ENCODE measurements at regions of chr9 and their contacts with region 1.

Region 1: GRCh38 chr9:87812375-87813118 is 70.1 kb upstream of the SPATA31E1 start:
- DNase-seq: no peak
- H3K4me3 ChIP-seq: no peak overlapping the region
- H3K27ac ChIP-seq: no peak overlapping the region
- H3K4me1 ChIP-seq: no peaks in the 10 kb centered on the region; a peak in 1 of 7 replicates
- H3K27me3 ChIP-seq: no peaks in the 10 kb centered on the region
- CTCF ChIP-seq: peak; percentile 78 to 99 (median 97)
- EP300 ChIP-seq: no peak
- POLR2A ChIP-seq: no peak
- RAD21 ChIP-seq: peak; percentile 94

Region 2: GRCh38 chr9:87684627-87685219 is 127.8 kb before region 1 on chr9:
- CTCF ChIA-PET with region 1: interaction called, 88 read pairs
- POLR2A ChIA-PET with region 1: no interaction called
- DNase-seq: peak in 1 of 2 experiments; percentile 84
- H3K4me3 ChIP-seq: no peak overlapping the region
- H3K27ac ChIP-seq: no peak overlapping the region
- H3K4me1 ChIP-seq: no peaks in the 10 kb centered on the region; a peak in 2 of 7 replicates
- H3K27me3 ChIP-seq: no peaks in the 10 kb centered on the region
- CTCF ChIP-seq: peak; percentile 70 to 80 (median 76)
- EP300 ChIP-seq: no peak
- POLR2A ChIP-seq: no peak
- RAD21 ChIP-seq: peak; percentile 43 to 58; a peak in 3 of 4 replicates

Region 3: GRCh38 chr9:87707805-87708506 is 104.6 kb before region 1 on chr9:
- CTCF ChIA-PET with region 1: interaction called, 15 read pairs
- POLR2A ChIA-PET with region 1: no interaction called
- DNase-seq: no peak
- H3K4me3 ChIP-seq: no peak overlapping the region
- H3K27ac ChIP-seq: no peak overlapping the region
- H3K4me1 ChIP-seq: no peaks in the 10 kb centered on the region; a peak in 1 of 7 replicates
- H3K27me3 ChIP-seq: no peaks in the 10 kb centered on the region
- CTCF ChIP-seq: no peak
- EP300 ChIP-seq: no peak
- POLR2A ChIP-seq: no peak
- RAD21 ChIP-seq: no peak

Region 4: GRCh38 chr9:87725900-87726709 is 86.4 kb before region 1 on chr9 and contains the start of gene CTSL:
- CTCF ChIA-PET with region 1: interaction called, 67 read pairs
- POLR2A ChIA-PET with region 1: interaction called, 3 read pairs
- DNase-seq: peak; percentile 85 to 93
- H3K4me3 ChIP-seq: peak within 1 kb of the TSS; percentile 53 to 76 (median 62)
- H3K27ac ChIP-seq: peak within 1 kb of the TSS; percentile 72; the same call in 1 of the 2 replicates
- H3K4me1 ChIP-seq: no peaks in the 10 kb centered on the region; a peak in 3 of 7 replicates
- H3K27me3 ChIP-seq: no peaks in the 10 kb centered on the region; a peak in 1 of 7 replicates
- CTCF ChIP-seq: peak; percentile 47 to 65 (median 64)
- EP300 ChIP-seq: no peak
- POLR2A ChIP-seq: peak; percentile 59 to 88
- RAD21 ChIP-seq: peak; percentile 53 to 69; a peak in 3 of 4 replicates
- total RNA-seq, gene CTSL: 34.4 and 38.2 TPM in 2 replicates

Region 5: DNA sequence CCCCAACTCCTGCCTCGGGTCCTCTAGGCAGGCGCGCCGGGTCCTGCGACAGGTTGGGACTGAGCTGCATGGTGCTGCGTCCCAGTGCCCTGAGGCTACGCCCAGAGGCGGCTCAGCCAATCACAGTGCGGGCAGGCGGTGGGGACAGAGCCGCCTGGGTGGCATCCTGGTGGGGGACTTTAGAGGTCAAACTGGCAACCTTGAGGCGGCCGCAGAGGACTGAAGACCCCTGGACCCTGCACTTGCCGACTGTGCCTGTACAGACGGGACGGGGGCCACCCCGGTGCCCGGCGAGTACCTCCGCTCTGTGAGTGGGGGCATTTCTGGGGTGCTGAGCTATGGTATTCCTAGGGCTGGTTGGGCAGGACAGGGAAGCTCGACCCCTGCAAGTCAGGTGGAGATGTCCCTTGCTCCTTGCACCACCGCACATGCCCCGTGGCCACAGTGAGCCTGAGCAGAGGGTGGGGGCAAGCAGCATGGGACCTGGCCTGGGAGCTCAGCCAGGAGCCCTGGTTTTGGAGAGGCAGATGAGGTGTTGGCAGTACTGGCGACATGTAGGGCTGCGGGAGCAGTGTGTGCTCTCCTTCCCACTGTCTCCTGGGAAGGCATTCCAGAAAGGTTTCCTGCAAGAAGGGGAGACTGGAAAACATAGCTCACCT is 41.1 kb before region 1 on chr9:
- CTCF ChIA-PET with region 1: interaction called, 29 read pairs
- POLR2A ChIA-PET with region 1: no interaction called
- DNase-seq: peak; percentile 44 to 80
- H3K4me3 ChIP-seq: no peak overlapping the region
- H3K27ac ChIP-seq: no peak overlapping the region
- H3K4me1 ChIP-seq: peaks cover 0 to 6% (median 1%) of the 10 kb centered on the region in 4 experiments; a peak in 3 of 7 replicates
- H3K27me3 ChIP-seq: no peaks in the 10 kb centered on the region
- CTCF ChIP-seq: no peak; a peak in 1 of 4 replicates
- EP300 ChIP-seq: no peak
- POLR2A ChIP-seq: no peak
- RAD21 ChIP-seq: no peak; a peak in 1 of 4 replicates